ENCODE measurements at regions of chr3 and their contacts with region 1.

Region 1: DNA sequence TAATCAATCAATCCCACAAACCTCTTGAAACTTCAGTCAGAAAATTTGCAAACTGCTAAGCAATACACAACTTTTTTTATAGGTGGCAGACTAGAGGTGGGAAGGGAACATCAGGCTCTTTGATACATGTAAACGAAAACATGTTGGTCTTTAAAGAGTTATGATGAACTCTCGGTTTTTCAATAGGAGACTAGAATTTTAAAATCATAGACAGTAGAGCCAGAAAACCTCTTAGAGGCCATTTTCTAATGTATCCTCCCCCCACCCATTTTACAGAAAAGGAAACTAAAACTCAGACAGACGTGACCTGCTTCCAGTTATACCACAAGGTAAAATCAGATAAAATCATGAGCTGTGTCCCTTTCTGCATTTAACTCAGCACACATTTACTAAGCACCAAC is 179.1 kb upstream of the LPP start:
- DNase-seq: no peak
- ATAC-seq: peak; percentile 10
- H3K4me3 Mint-ChIP-seq: peak overlapping the region; percentile 74
- H3K27ac Mint-ChIP-seq: peak overlapping the region; percentile 81
- H3K4me1 Mint-ChIP-seq: peaks cover 61% of the 10 kb centered on the region
- H3K27me3 Mint-ChIP-seq: peaks cover 5% of the 10 kb centered on the region
- CTCF ChIP-seq: no peak

Region 2: DNA sequence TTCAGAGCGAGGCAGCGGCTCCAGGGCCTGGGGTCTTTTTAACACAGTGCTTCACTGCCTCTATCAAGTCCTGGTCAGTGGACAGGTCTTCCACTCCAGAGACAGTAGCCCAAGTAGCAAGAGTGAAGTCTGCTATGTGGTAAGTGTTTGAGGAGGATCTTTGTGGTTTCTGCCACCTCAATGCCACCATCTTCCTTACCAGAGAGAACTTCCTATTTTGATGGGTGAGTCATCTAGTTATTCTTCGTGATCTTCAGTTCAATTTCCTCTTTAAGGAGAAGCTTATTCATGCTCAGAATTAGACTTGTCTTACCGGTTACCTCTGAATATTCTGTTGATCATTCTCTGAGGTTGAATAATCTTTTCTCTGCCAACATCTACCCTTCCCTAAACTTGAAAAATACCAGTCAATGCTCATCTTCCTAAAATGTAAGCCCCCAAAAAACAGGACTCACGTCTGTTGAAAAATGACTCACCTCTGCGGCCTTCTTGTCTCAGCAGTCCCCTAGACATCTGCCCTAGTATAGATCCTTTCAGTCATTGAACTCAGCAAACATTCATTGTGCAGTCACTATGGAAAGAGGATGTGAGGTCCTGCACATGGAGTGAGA is 197.4 kb before region 1 on chr3:
- CTCF ChIA-PET with region 1: no interaction called
- POLR2A ChIA-PET with region 1: interaction called, 3 read pairs
- intact Hi-C with region 1: loop called (anchors 2 kb)
- DNase-seq: peak; percentile 24
- ATAC-seq: peak; percentile 78
- H3K4me3 Mint-ChIP-seq: peak overlapping the region; percentile 58
- H3K27ac Mint-ChIP-seq: peak overlapping the region; percentile 88
- H3K4me1 Mint-ChIP-seq: peaks cover 38% of the 10 kb centered on the region
- H3K27me3 Mint-ChIP-seq: no peaks in the 10 kb centered on the region
- CTCF ChIP-seq: no peak

Region 3: GRCh38 chr3:187943679-187944390 is 31.0 kb before region 1 on chr3:
- CTCF ChIA-PET with region 1: interaction called, 4 read pairs
- POLR2A ChIA-PET with region 1: interaction called, 3 read pairs
- intact Hi-C with region 1: loop called (anchors 2 kb)
- DNase-seq: no peak
- ATAC-seq: no peak
- H3K4me3 Mint-ChIP-seq: no peak overlapping the region
- H3K27ac Mint-ChIP-seq: no peak overlapping the region
- H3K4me1 Mint-ChIP-seq: peaks cover 15% of the 10 kb centered on the region
- H3K27me3 Mint-ChIP-seq: peaks cover 17% of the 10 kb centered on the region
- CTCF ChIP-seq: no peak

Region 4: DNA sequence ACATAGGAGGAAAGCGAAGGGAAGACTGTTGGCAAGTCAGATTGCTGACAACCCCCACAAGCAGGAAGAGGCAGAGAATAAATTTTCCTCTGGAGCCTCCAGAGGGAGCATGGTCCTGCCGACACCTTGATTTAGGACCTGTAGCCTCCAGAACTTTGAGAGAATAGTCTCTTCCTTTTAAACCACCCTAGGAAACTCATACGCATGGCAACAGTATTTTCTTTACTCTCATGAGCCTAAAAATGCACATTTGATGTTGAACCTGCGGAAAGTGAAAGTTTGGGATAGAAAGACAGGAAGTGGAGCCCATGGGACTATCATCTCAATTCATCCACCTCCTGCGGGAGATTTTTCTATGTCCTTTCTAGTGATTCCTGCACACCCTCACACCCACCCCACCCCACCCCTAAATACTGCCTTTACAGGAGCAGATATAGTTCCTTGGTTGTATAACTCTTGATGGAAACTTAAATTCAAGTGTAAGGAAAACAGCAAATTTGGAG is 62.4 kb after region 1 on chr3:
- CTCF ChIA-PET with region 1: no interaction called
- POLR2A ChIA-PET with region 1: interaction called, 11 read pairs
- intact Hi-C with region 1: no loop called
- DNase-seq: no peak
- ATAC-seq: no peak
- H3K4me3 Mint-ChIP-seq: no peak overlapping the region
- H3K27ac Mint-ChIP-seq: no peak overlapping the region
- H3K4me1 Mint-ChIP-seq: peaks cover 17% of the 10 kb centered on the region
- H3K27me3 Mint-ChIP-seq: no peaks in the 10 kb centered on the region
- CTCF ChIP-seq: no peak

Region 5: DNA sequence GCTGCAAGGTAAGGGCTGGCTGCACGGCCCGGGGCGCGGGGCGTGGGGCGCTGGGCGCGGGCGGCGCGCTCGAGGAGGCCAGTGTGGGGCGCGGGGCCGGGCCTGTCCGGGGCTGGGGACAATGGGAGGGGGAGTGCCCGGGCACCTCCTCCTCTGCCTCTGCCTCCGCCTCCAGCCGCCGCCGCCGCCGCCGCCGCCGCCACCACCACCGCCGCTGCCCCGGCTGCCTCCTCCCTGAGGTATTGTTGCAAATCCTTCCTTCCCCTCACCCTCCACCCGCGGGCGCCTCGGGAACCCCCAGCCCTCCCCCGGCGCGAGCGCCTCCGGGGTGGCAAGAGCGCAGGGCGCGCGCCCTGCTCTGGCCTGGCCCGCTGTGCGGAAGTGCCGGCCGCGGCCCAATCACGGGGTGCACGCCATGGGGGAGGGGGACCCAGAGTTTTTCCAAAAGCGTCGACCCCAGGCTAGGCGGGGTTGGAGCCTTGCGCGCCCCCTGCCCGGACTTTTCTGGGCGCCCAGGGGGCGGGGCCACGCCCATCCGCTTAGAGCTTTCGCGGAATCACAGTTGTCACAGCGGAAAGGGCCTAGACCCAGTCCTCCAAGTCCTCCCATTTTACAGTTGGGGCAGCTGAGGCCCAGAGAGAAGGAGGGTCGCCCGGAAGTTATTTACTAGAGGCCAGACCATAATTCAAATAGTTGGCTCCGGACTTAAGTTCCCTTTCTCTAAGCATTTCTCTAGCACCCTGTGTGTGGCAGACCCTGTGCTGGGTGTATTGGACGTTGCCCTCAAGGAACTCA is 179.3 kb after region 1 on chr3 and contains the start of gene LPP:
- CTCF ChIA-PET with region 1: no interaction called
- POLR2A ChIA-PET with region 1: interaction called, 11 read pairs
- intact Hi-C with region 1: loop called (anchors 2 kb)
- DNase-seq: peak; percentile 88
- ATAC-seq: peak; percentile 89
- H3K4me3 Mint-ChIP-seq: peak within 1 kb of the TSS; percentile 96
- H3K27ac Mint-ChIP-seq: peak within 1 kb of the TSS; percentile 92
- H3K4me1 Mint-ChIP-seq: peaks cover 51% of the 10 kb centered on the region
- H3K27me3 Mint-ChIP-seq: no peaks in the 10 kb centered on the region
- CTCF ChIP-seq: no peak
- total RNA-seq, gene LPP: 49.5 and 60.1 TPM in 2 replicates

Region 6: GRCh38 chr3:188439080-188439479 is 464.2 kb after region 1 on chr3:
- CTCF ChIA-PET with region 1: no interaction called
- POLR2A ChIA-PET with region 1: no interaction called
- intact Hi-C with region 1: loop called (anchors 2 kb)
- DNase-seq: no peak
- ATAC-seq: peak; percentile 85
- H3K4me3 Mint-ChIP-seq: peak overlapping the region; percentile 52
- H3K27ac Mint-ChIP-seq: peak overlapping the region; percentile 88
- H3K4me1 Mint-ChIP-seq: peaks cover 95% of the 10 kb centered on the region
- H3K27me3 Mint-ChIP-seq: no peaks in the 10 kb centered on the region
- CTCF ChIP-seq: no peak

Region 7: DNA sequence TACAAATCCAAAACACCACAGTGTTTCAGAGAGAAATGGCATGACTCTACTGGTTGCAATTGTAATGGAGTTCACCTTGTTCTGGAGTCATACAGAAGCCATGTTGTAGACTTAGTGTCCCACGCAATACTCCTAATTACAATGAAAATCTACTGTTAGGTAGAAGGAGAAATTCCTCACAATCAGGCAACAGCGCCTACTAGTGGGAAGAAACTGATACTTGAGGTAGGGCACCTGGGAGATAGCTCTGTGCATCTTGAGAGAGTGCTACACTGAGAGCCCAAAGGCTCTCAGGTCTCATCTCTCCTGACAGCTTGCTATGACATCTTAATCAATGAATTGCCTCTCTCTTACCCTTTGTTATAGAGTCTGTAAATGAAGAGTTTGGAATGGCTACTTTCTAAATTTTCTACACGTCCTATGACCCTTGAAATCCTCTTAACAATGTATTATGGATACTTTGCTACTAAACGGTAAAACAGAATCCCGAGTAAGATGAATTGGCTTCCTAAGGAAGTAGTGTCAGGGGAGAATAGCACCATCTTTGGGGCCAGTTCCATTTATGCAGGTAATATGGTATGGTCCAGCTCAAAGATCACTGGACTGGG is 774.2 kb after region 1 on chr3:
- CTCF ChIA-PET with region 1: no interaction called
- POLR2A ChIA-PET with region 1: no interaction called
- intact Hi-C with region 1: loop called (anchors 2 kb)
- DNase-seq: no peak
- ATAC-seq: no peak
- H3K4me3 Mint-ChIP-seq: no peak overlapping the region
- H3K27ac Mint-ChIP-seq: peak overlapping the region; percentile 55
- H3K4me1 Mint-ChIP-seq: peaks cover 43% of the 10 kb centered on the region
- H3K27me3 Mint-ChIP-seq: no peaks in the 10 kb centered on the region
- CTCF ChIP-seq: no peak